Transverse colon (tissue), 4 donors: ENCODE measurements at regions of chr14 and their contacts with region 1.

Region 1: DNA sequence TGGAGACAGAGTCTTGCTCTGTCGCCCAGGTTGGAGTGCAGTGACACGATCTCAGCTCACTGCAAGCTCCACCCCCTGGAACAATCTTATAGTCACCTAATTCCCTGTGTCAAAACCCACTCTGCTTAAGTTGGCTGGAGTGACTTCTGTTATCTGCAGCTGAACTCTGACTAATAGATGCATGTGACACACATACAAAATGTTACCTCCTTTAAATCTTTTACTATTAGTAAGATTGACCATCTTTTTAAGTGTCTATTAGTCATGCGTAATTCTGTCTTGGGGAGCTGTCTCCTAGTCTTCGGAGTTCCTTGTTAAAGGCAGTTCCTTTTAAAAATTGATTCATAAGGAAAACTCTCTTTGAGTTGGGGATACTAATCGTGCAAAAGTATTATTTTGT is 7.4 kb downstream of the IFI27L1 start:
- DNase-seq: no peak
- H3K4me3 ChIP-seq: no peak overlapping the region
- H3K27ac ChIP-seq: no peak overlapping the region
- H3K4me1 ChIP-seq: no peaks in the 10 kb centered on the region
- H3K27me3 ChIP-seq: no peaks in the 10 kb centered on the region
- CTCF ChIP-seq: no peak
- EP300 ChIP-seq: no peak
- POLR2A ChIP-seq: no peak

Region 2: DNA sequence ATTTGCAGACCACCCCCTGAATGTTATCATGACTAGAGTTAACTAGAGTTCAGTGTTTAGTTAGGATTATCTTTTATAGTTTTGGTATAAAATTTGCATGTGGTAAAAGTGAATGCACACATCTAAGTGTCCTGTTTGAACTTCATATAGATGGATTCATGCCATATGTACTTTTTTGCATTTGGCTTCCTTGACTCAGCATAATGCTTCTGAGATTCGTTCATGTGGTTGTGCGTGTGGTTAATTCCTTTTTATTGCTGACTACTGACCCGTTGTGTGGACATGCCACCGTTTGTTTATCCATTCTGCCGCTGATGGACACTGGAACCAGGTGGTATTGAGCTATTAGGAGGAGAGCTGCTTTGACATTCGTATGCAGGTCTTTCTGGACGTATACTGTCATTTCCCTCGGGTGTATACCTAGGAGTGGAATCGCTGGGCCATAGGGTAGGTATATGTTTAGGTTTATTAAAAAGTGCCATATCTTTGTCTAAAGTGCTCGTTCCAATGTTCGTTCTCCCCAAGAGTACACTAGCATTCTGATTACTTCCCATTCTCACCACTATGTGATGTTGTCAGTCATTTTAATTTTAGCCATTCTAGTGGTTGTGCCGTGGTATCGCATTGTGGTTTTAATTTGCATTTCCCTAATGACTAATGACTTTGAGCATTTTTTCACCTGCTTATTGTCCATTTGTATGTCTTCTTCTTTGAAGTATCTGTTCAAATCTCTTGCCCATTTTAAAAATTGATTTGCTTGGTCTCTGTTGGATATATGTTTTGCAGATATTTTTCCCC is 1537.3 kb before region 1 on chr14:
- in situ Hi-C with region 1: no loop called
- intact Hi-C with region 1: no loop called
- DNase-seq: no peak
- H3K4me3 ChIP-seq: no peak overlapping the region
- H3K27ac ChIP-seq: peak overlapping the region; percentile 5 to 67 (median 46)
- H3K4me1 ChIP-seq: peaks cover 13 to 33% (median 24%) of the 10 kb centered on the region in 4 donors
- H3K27me3 ChIP-seq: no peaks in the 10 kb centered on the region
- CTCF ChIP-seq: peak in 3 of 5 experiments; percentile 13 to 43 (median 41)
- EP300 ChIP-seq: no peak
- POLR2A ChIP-seq: no peak

Region 3: DNA sequence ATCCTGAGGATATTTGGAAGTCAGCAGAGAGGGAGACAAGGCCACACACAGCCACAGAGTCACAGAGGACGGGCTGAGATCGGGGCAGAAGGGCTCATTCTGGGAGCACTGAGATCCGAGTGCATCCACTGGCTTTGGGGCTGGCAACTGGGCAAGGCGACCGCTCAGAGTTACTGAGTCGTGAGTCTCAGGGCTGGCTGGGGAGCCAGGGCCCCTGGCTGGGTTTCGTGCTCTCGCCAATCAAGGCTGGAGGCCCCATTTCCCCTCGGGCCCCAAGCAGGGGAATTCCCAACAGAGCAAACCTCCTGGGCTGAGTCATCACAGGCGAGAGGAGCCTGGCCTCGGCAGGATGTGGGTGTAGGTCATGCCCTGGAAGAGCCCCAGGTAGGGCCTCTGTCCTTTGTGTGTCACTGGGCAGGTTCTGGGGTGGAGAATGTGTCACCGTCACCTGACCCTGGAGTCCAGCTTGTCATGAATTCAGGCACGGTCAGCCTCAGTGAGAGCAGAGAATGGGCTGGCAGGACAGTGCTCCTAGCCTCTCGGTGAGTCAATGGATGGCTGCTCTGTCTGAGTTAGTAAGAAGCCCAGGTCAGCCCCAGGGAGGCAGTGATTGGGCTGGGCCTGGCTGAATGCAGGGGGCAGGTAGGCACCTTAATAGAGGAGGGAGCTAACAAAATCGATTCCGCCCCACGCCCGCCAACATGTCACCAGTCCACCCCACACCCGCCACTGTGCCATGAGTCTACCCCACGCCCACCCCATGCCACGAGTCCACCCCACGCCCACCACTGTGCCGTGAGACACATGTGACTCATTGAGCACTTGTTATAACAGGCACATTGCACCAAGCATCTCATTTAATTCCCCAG is 129.0 kb before region 1 on chr14:
- in situ Hi-C with region 1: no loop called
- intact Hi-C with region 1: no loop called
- DNase-seq: peak; percentile 84
- H3K4me3 ChIP-seq: no peak overlapping the region
- H3K27ac ChIP-seq: peak overlapping the region; percentile 70 to 87 (median 73)
- H3K4me1 ChIP-seq: peaks cover 4 to 56% (median 44%) of the 10 kb centered on the region in 4 donors
- H3K27me3 ChIP-seq: no peaks in the 10 kb centered on the region
- CTCF ChIP-seq: no peak
- EP300 ChIP-seq: no peak
- POLR2A ChIP-seq: no peak

Region 4: GRCh38 chr14:94598814-94599652 is 510.5 kb after region 1 on chr14:
- in situ Hi-C with region 1: no loop called
- intact Hi-C with region 1: loop called (anchors 5 kb)
- DNase-seq: peak; percentile 76
- H3K4me3 ChIP-seq: no peak overlapping the region
- H3K27ac ChIP-seq: peak overlapping the region; percentile 73 to 78 (median 76)
- H3K4me1 ChIP-seq: peaks cover 14 to 37% (median 19%) of the 10 kb centered on the region in 4 donors
- H3K27me3 ChIP-seq: no peaks in the 10 kb centered on the region
- CTCF ChIP-seq: no peak
- EP300 ChIP-seq: peak; percentile 91
- POLR2A ChIP-seq: no peak